Activated naive CD4-positive, alpha-beta T cell treated with anti-CD3 and anti-CD28 coated beads for 36 hours (primary cell): ENCODE measurements at regions of chr4 and their contacts with region 1.

Region 1: GRCh38 chr4:101328063-101328602 is 19.2 kb downstream of the PPP3CA start:
- DNase-seq: peak; percentile 52
- H3K4me3 Mint-ChIP-seq: no peak overlapping the region
- H3K27ac Mint-ChIP-seq: peak overlapping the region; percentile 73
- H3K4me1 Mint-ChIP-seq: peaks cover 28% of the 10 kb centered on the region
- H3K27me3 Mint-ChIP-seq: peaks cover 25% of the 10 kb centered on the region

Region 2: GRCh38 chr4:100082852-100083251 is 1245.3 kb before region 1 on chr4:
- CTCF ChIA-PET with region 1: no interaction called
- intact Hi-C with region 1: loop called (anchors 2 kb)
- DNase-seq: peak; percentile 35
- H3K4me3 Mint-ChIP-seq: no peak overlapping the region
- H3K27ac Mint-ChIP-seq: peak overlapping the region; percentile 89
- H3K4me1 Mint-ChIP-seq: peaks cover 72% of the 10 kb centered on the region
- H3K27me3 Mint-ChIP-seq: peaks cover 2% of the 10 kb centered on the region

Region 3: DNA sequence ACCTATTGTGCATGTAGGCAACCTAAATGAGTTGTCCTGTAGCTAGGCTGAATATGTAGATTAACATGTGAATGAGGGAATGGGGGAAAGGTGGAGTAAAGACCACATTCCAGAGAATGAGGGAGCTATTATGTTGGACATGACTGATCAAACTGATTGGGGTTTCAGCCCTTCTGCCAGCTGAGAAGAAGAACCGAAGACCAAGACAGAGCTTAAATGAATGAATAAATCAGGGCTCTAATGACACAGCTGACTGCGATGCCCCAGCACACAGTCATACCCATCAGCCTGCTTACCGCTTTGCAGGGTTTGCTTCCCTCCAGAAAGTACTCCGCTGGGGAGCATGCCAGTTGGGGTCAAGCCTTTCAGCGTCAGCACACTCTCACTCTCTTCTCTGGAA is 296.2 kb before region 1 on chr4:
- CTCF ChIA-PET with region 1: no interaction called
- intact Hi-C with region 1: no loop called
- DNase-seq: no peak
- H3K4me3 Mint-ChIP-seq: no peak overlapping the region
- H3K27ac Mint-ChIP-seq: no peak overlapping the region
- H3K4me1 Mint-ChIP-seq: no peaks in the 10 kb centered on the region
- H3K27me3 Mint-ChIP-seq: no peaks in the 10 kb centered on the region

Region 4: GRCh38 chr4:101156619-101157310 is 171.4 kb before region 1 on chr4:
- CTCF ChIA-PET with region 1: no interaction called
- intact Hi-C with region 1: loop called (anchors 1 kb)
- DNase-seq: no peak
- H3K4me3 Mint-ChIP-seq: no peak overlapping the region
- H3K27ac Mint-ChIP-seq: no peak overlapping the region
- H3K4me1 Mint-ChIP-seq: peaks cover 28% of the 10 kb centered on the region
- H3K27me3 Mint-ChIP-seq: no peaks in the 10 kb centered on the region

Region 5: DNA sequence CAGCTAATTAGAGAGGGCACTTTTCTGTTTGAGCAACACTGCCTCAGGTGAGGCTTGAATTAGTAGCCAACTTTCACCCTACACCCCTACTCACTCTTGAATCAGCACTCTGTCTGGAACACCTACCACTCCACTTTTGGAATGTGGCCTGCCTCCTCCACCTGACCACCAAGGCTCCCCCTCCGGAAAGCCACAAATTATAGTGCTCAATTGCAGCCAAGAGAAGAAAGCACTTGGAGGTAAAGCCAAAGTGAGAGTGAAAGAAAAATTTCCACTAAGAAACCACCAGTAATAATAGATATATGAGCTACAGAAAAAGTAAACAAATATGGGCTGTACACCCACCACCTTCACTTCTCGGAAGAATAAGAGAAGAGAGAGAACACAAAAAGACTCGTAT is 21.9 kb before region 1 on chr4:
- CTCF ChIA-PET with region 1: no interaction called
- intact Hi-C with region 1: loop called (anchors 1 kb)
- DNase-seq: no peak
- H3K4me3 Mint-ChIP-seq: peak overlapping the region; percentile 23
- H3K27ac Mint-ChIP-seq: no peak overlapping the region
- H3K4me1 Mint-ChIP-seq: peaks cover 35% of the 10 kb centered on the region
- H3K27me3 Mint-ChIP-seq: no peaks in the 10 kb centered on the region

Region 6: DNA sequence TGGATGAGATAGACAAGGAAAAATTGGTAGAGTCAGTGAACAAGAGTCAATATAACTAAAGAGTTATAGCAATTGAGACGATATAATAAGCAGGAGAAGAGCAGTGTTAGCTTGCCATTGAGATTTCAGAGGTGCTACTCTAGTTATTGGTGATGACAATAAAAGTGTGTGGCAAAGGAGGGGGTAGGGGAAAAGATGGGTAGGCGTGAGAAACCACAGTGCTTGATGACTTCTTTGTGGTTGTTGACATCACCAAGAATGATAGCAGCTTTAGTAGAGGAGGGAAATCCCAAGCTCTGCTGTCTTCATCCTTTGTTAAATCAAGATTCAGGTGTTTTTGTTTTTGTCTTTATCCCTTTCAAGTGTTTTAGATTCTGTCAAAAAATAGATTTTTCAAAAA is 199.1 kb after region 1 on chr4:
- CTCF ChIA-PET with region 1: no interaction called
- intact Hi-C with region 1: loop called (anchors 1 kb)
- DNase-seq: peak; percentile 88
- H3K4me3 Mint-ChIP-seq: no peak overlapping the region
- H3K27ac Mint-ChIP-seq: no peak overlapping the region
- H3K4me1 Mint-ChIP-seq: peaks cover 15% of the 10 kb centered on the region
- H3K27me3 Mint-ChIP-seq: peaks cover 45% of the 10 kb centered on the region

Region 7: GRCh38 chr4:102390438-102390837 is 1062.3 kb after region 1 on chr4:
- CTCF ChIA-PET with region 1: no interaction called
- intact Hi-C with region 1: loop called (anchors 1 kb)
- DNase-seq: no peak
- H3K4me3 Mint-ChIP-seq: no peak overlapping the region
- H3K27ac Mint-ChIP-seq: no peak overlapping the region
- H3K4me1 Mint-ChIP-seq: peaks cover 17% of the 10 kb centered on the region
- H3K27me3 Mint-ChIP-seq: peaks cover 4% of the 10 kb centered on the region